Activated CD4-positive, alpha-beta T cell treated with anti-CD3 and anti-CD28 coated beads for 36 hours (primary cell): ENCODE measurements at regions of chr5 and their contacts with region 1.

Region 1: GRCh38 chr5:776792-777711 is 7.5 kb downstream of the ZDHHC11B start:
- DNase-seq: no peak
- ATAC-seq: no peak
- H3K4me3 Mint-ChIP-seq: no peak overlapping the region
- H3K27ac Mint-ChIP-seq: no peak overlapping the region
- H3K4me1 Mint-ChIP-seq: no peaks in the 10 kb centered on the region
- H3K27me3 Mint-ChIP-seq: peaks cover 2% of the 10 kb centered on the region

Region 2: GRCh38 chr5:683551-684481 is 93.2 kb before region 1 on chr5:
- CTCF ChIA-PET with region 1: no interaction called
- POLR2A ChIA-PET with region 1: interaction called, 3 read pairs
- intact Hi-C with region 1: loop called (anchors 1 to 5 kb)
- DNase-seq: no peak
- ATAC-seq: no peak
- H3K4me3 Mint-ChIP-seq: no peak overlapping the region
- H3K27ac Mint-ChIP-seq: no peak overlapping the region
- H3K4me1 Mint-ChIP-seq: no peaks in the 10 kb centered on the region
- H3K27me3 Mint-ChIP-seq: no peaks in the 10 kb centered on the region

Region 3: GRCh38 chr5:759111-759751 is 17.8 kb before region 1 on chr5:
- CTCF ChIA-PET with region 1: no interaction called
- POLR2A ChIA-PET with region 1: no interaction called
- intact Hi-C with region 1: no loop called
- DNase-seq: peak; percentile 56
- ATAC-seq: peak; percentile 65
- H3K4me3 Mint-ChIP-seq: peak overlapping the region; percentile 7
- H3K27ac Mint-ChIP-seq: no peak overlapping the region
- H3K4me1 Mint-ChIP-seq: peaks cover 21% of the 10 kb centered on the region
- H3K27me3 Mint-ChIP-seq: peaks cover 2% of the 10 kb centered on the region

Region 4: DNA sequence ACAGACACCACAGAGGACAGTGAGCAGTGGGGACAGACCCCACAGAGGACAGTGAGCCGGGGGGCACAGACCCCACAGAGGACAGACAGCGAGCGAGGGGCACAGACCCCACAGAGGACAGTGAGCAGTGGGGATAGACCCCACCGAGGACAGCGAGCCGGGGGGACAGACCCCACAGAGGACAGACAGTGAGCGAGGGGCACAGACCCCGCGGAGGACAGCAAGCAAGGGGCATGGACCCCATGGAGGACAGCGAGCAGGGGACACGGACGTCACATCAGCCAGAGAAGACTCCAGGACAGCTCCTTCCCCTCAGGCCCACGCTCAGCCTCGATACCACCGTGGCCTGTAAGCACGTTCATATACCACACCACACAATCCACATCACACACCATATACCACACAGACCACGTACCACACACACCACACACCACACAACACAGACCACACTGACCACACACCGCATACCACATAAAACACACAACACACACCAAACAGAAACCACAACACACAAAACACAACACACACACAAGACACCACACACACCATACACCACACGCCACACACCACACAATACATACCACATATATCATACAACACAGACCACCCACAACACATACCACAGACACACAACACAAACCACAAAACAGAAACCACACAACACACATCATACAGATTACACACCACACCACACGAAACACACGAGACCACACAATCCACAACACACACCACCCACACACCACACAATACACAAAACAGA is 78.9 kb after region 1 on chr5:
- CTCF ChIA-PET with region 1: no interaction called
- POLR2A ChIA-PET with region 1: no interaction called
- intact Hi-C with region 1: no loop called
- DNase-seq: no peak
- ATAC-seq: peak; percentile 43
- H3K4me3 Mint-ChIP-seq: no peak overlapping the region
- H3K27ac Mint-ChIP-seq: no peak overlapping the region
- H3K4me1 Mint-ChIP-seq: no peaks in the 10 kb centered on the region
- H3K27me3 Mint-ChIP-seq: peaks cover 3% of the 10 kb centered on the region